Activated CD4-positive, alpha-beta memory T cell treated with anti-CD3 and anti-CD28 coated beads, Interleukin-2, amount 10 ng/mL, durations not matched to agents 7 days and 5 days (primary cell): ENCODE measurements at regions of chr10 and their contacts with region 1.

Region 1: DNA sequence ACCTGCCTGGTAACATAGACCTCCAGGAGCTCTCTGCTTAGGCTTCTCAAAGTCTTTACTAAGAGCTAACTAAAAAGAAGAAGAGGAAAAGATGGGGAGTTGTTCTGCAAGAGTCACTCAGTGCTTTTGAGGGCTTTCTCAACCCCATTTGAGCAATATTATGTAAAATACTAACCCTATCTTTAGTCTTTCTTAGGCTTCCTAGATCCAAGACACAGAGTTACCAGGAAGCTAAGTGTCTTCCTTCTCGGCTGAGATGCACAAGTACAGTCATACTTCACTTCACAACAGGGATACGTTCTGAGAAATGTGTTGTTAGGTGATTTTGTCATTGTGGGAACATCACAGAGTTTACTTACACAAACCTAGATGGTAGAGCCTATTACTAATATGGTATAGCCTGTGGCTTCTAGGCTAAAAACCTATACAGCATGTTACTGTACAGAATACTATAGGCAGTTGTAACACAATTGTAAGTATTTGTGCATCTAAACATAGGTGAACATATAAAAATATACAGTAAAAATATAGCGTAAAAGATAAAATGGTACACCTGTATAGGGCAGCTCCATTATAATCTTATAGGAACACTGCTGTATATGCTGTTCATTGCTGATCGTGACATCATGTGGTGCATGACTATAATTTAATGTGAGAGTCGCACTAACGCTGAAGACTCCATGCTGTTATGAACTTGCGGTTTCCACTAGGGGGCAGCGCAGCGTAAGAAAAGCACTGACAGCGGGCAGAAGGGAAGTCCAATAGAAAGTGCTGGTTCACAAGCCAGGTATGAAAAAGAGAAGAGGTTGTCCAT is 16.3 kb downstream of the ANKRD22 start:
- DNase-seq: peak; percentile 91
- H3K4me3 Mint-ChIP-seq: no peak overlapping the region
- H3K27ac Mint-ChIP-seq: no peak overlapping the region
- H3K4me1 Mint-ChIP-seq: peaks cover 32% of the 10 kb centered on the region
- H3K27me3 Mint-ChIP-seq: no peaks in the 10 kb centered on the region

Region 2: GRCh38 chr10:88820748-88821389 is 14.4 kb before region 1 on chr10:
- CTCF ChIA-PET with region 1: interaction called, 19 read pairs
- POLR2A ChIA-PET with region 1: interaction called, 5 read pairs
- DNase-seq: no peak
- H3K4me3 Mint-ChIP-seq: no peak overlapping the region
- H3K27ac Mint-ChIP-seq: no peak overlapping the region
- H3K4me1 Mint-ChIP-seq: peaks cover 23% of the 10 kb centered on the region
- H3K27me3 Mint-ChIP-seq: peaks cover 2% of the 10 kb centered on the region

Region 3: DNA sequence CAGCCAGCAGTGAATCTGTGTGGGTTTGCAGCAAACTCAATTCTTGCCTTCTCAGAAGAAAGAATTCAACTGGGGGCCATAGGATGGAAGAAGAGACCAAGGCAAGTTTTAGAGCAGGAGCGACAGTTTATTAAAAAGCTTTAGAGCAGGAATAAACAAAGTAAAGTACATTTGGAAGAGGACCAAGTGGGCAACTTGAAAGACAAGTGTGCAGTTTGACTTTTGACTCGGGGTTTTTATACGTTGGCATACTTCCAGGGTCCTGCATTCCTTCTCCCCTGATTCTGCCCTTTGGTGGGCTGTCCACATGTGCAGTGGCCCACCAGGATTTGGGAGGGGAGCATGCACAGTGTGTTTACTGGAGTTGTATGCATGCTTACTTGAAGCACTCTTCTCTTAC is 19.4 kb after region 1 on chr10:
- CTCF ChIA-PET with region 1: interaction called, 13 read pairs
- POLR2A ChIA-PET with region 1: interaction called, 4 read pairs
- DNase-seq: no peak
- H3K4me3 Mint-ChIP-seq: no peak overlapping the region
- H3K27ac Mint-ChIP-seq: no peak overlapping the region
- H3K4me1 Mint-ChIP-seq: peaks cover 8% of the 10 kb centered on the region
- H3K27me3 Mint-ChIP-seq: no peaks in the 10 kb centered on the region

Region 4: DNA sequence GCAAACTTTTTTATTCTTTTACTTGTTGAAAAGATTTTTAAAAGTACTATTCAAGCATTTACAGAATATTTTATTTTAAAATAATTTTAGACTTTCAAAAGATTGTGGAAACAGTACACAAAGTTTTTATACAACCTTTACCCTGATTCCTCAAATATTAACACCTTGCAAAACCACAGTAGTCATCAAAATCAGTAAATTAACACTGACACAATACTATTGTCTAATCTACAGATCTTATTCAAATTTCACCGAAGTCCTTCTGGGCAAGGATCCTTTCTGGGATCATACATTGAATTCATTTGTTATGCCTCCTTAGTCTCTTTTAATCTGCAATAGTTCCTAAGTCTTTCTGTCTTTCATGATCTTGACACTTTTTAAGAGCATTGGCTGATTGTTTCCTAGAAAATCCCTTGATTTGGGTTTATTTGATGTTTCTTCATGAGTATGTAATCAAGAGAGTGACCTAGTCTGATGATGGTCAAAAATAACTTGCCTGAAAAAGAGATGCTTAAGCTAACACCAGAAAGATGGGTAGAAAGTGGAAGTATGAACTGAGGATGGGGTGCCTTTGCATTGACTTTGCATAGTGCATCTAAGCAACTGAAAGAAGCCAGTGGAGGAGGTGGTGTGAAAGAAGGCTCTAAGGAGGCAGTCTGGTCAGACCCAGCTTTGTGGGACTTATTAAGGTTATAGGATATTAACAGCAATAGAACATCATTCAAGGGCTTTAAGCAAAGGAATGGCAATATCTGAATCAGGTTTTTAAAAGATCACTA is 54.4 kb after region 1 on chr10:
- CTCF ChIA-PET with region 1: interaction called, 18 read pairs
- POLR2A ChIA-PET with region 1: no interaction called
- DNase-seq: no peak
- H3K4me3 Mint-ChIP-seq: no peak overlapping the region
- H3K27ac Mint-ChIP-seq: no peak overlapping the region
- H3K4me1 Mint-ChIP-seq: peaks cover 54% of the 10 kb centered on the region
- H3K27me3 Mint-ChIP-seq: no peaks in the 10 kb centered on the region